ENCODE measurements at regions of chr6 and their contacts with region 1.

Region 1: DNA sequence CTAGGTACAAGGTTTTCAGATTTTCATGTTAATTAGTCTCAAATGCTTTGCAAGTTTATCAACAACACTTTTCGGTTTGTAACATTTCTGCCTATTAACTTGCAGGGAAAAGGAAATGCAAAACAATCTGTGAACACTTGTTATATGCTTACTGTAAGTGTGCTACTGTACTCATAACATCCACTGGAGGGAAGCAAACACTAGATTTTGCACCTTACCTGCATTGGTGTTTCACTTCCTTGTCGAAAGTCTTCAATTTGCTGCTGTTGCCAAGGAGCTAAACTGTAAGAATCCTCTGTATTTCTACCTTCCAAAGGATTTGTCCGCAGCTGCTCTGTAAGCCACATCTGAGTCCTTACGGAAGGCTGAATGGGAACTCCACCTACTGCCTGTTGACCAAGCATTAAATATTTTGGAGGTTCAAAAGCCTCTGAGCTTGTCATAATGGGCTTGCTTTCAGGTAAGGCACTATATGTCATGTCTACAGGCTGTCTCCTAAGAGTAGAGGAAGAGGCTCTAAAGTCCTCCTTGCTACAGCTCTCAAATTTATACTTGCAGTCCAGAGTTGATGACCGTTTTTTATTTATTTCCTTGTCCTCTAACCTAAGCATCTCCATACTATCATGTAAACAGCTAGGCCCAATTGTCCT is 17.3 kb downstream of the PLN start:
- DNase-seq: peak in 16 of 35 experiments; percentile 4 to 77 (median 19)
- ATAC-seq: peak; percentile 88 to 97 (median 94)
- H3K4me3 ChIP-seq: no peak overlapping the region
- H3K4me3 Mint-ChIP-seq: no peak overlapping the region
- H3K27ac ChIP-seq: peak overlapping the region; percentile 48
- H3K27ac Mint-ChIP-seq: peak overlapping the region; percentile 62 to 83
- H3K4me1 ChIP-seq: peaks cover 0 to 2% of the 10 kb centered on the region in 2 experiments
- H3K4me1 Mint-ChIP-seq: peaks cover 42 to 51% (median 50%) of the 10 kb centered on the region in 3 donors
- H3K27me3 ChIP-seq: no peaks in the 10 kb centered on the region
- H3K27me3 Mint-ChIP-seq: no peaks in the 10 kb centered on the region

Region 2: GRCh38 chr6:117545161-117545595 is 1020.3 kb before region 1 on chr6:
- CTCF ChIA-PET with region 1: no interaction called
- POLR2A ChIA-PET with region 1: no interaction called
- DNase-seq: no peak
- ATAC-seq: no peak
- H3K4me3 ChIP-seq: no peak overlapping the region
- H3K4me3 Mint-ChIP-seq: no peak overlapping the region
- H3K27ac ChIP-seq: no peak overlapping the region
- H3K27ac Mint-ChIP-seq: peak overlapping the region in 1 of 2 donors; percentile 16
- H3K4me1 ChIP-seq: peaks cover 17 to 20% of the 10 kb centered on the region in 2 experiments
- H3K4me1 Mint-ChIP-seq: peaks cover 34 to 36% (median 34%) of the 10 kb centered on the region in 3 donors
- H3K27me3 ChIP-seq: no peaks in the 10 kb centered on the region
- H3K27me3 Mint-ChIP-seq: peaks cover 2% of the 10 kb centered on the region in 2 donors

Region 3: GRCh38 chr6:118709859-118710350 is 144.5 kb after region 1 on chr6:
- CTCF ChIA-PET with region 1: interaction called in 1 of 2 experiments, 4 read pairs
- POLR2A ChIA-PET with region 1: interaction called in 1 of 2 experiments, 12 read pairs
- DNase-seq: peak; percentile 41 to 89 (median 65)
- ATAC-seq: peak; percentile 92 to 93 (median 92)
- H3K4me3 ChIP-seq: peak overlapping the region; percentile 74 to 80
- H3K4me3 Mint-ChIP-seq: peak overlapping the region; percentile 91 to 97 (median 96)
- H3K27ac ChIP-seq: peak overlapping the region; percentile 75
- H3K27ac Mint-ChIP-seq: peak overlapping the region; percentile 98
- H3K4me1 ChIP-seq: peaks cover 49 to 50% of the 10 kb centered on the region in 2 experiments
- H3K4me1 Mint-ChIP-seq: peaks cover 70 to 78% (median 78%) of the 10 kb centered on the region in 3 donors
- H3K27me3 ChIP-seq: no peaks in the 10 kb centered on the region
- H3K27me3 Mint-ChIP-seq: no peaks in the 10 kb centered on the region

Region 4: DNA sequence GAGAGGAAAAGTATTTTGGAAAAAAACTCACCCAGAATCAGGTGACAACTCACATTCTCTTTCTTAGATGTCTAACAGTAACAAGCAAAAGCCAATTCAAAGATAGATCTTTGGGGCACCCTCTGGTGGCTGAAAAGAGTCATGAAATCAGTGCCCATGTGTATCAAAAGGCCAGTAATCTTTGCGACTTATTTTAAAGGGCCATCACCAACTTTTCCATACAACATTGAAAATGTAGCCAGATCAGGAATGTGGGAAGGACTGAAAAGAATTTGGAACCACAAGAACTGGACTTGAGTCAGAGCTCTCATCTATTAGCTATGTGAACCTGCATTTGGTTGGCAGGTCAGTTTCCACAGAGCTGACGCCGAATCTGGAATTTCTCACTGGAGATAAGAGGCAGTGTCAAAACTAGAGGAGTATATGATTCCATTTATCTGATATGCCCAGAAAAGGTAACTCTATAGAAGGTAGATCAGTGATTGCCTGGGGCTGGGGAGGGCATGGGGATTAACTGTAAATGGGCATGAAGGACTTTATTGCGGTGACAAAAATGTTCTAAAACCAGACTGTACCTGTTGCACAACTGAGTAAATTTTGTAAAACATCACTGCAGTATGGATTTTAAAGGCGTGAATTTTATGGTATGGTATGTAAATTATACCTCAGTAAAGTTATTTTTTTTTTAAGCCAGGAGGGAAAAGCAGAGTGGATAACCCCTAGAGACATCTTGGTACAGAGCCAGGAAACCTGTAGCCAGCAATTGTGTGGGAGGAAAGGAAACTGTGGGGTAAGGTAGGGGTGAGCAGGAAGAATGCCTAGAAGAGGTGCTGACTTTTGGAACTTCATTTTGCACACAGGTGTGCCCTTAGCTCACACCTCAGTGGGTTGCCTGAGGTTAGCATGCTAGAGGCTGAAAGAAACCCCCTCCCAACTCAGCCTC is 211.4 kb after region 1 on chr6:
- CTCF ChIA-PET with region 1: interaction called, 4 to 14 read pairs
- POLR2A ChIA-PET with region 1: no interaction called
- DNase-seq: peak; percentile 30 to 82 (median 58)
- ATAC-seq: peak; percentile 82 to 89 (median 85)
- H3K4me3 ChIP-seq: no peak overlapping the region
- H3K4me3 Mint-ChIP-seq: peak overlapping the region in 1 of 3 donors; percentile 44
- H3K27ac ChIP-seq: no peak overlapping the region
- H3K27ac Mint-ChIP-seq: peak overlapping the region; percentile 65 to 71
- H3K4me1 ChIP-seq: peaks cover 9% of the 10 kb centered on the region in 2 experiments
- H3K4me1 Mint-ChIP-seq: peaks cover 20 to 24% (median 24%) of the 10 kb centered on the region in 3 donors
- H3K27me3 ChIP-seq: no peaks in the 10 kb centered on the region
- H3K27me3 Mint-ChIP-seq: no peaks in the 10 kb centered on the region

Region 5: DNA sequence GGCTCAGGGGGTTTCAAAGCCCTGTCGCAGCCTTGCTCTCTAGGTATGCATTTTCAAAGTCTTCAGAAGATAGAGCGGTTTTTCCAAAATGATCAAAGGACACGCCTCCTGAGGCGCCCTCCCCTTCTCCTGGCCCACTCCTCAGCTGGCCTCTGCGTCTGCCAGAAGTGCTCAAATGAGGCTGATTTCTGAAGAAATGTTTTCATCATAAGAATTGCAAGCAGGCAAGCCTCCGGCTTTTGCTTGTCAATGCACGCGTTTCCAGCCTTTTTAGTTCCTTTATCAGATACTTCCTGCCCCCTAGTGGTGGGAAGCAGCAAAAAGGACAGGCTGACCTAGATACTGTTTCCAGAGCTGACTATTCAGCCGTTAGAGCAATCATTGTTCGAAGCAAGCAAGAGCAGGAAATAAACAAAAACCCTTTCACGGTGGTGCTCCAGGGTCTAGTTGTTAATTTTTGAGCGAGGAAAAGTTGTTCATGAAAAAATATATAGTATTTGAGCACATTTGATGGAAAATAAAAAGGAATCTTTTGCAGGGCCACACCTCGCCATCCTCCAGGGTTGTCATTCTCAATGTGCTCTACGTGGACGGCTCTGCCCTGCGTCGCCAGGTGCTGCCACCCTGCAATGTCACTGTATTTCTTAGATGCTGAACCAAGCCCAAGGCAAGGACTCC is 235.1 kb after region 1 on chr6:
- CTCF ChIA-PET with region 1: interaction called, 7 to 13 read pairs
- POLR2A ChIA-PET with region 1: interaction called, 5 to 6 read pairs
- DNase-seq: peak; percentile 60 to 91 (median 81)
- ATAC-seq: peak; percentile 89 to 94 (median 90)
- H3K4me3 ChIP-seq: no peak overlapping the region
- H3K4me3 Mint-ChIP-seq: peak overlapping the region; percentile 43 to 64 (median 60)
- H3K27ac ChIP-seq: peak overlapping the region; percentile 76
- H3K27ac Mint-ChIP-seq: peak overlapping the region; percentile 86 to 90
- H3K4me1 ChIP-seq: peaks cover 0 to 27% of the 10 kb centered on the region in 2 experiments
- H3K4me1 Mint-ChIP-seq: peaks cover 26 to 49% (median 42%) of the 10 kb centered on the region in 3 donors
- H3K27me3 ChIP-seq: no peaks in the 10 kb centered on the region
- H3K27me3 Mint-ChIP-seq: no peaks in the 10 kb centered on the region

Region 6: DNA sequence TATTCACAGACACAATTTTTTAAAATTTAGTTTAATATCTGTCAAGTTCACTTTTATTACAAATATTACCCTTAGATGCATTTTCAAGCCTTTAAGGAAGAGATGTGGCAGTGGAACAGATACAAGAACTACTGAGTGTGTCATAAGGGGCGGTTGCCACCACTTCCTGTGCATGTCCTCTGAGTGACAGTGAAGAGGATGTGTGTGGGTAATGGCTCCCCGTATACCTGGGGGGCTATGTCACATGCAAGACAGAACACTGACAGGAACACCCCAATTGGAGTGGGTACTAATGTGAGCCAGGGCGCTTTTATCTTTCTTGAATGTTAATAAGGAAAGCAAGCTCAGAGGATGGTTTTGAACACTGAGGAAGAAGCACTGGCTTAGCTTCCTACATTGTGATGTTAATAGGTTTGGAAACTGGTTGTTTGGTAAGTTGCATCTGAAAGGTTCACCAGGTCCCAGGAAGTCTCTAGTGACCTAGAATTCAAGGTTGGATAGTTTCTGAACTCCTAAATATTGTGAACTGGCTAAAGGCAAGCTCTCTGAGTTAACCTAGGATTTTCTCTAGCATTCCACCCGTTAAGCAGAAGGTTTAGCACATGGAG is 245.1 kb after region 1 on chr6:
- CTCF ChIA-PET with region 1: interaction called, 6 to 14 read pairs
- POLR2A ChIA-PET with region 1: no interaction called
- DNase-seq: peak; percentile 38 to 85 (median 72)
- ATAC-seq: peak; percentile 97 to 99 (median 98)
- H3K4me3 ChIP-seq: peak overlapping the region in 1 of 2 donors; percentile 8
- H3K4me3 Mint-ChIP-seq: peak overlapping the region; percentile 46 to 59 (median 51)
- H3K27ac ChIP-seq: peak overlapping the region; percentile 91
- H3K27ac Mint-ChIP-seq: peak overlapping the region; percentile 96
- H3K4me1 ChIP-seq: peaks cover 18 to 24% of the 10 kb centered on the region in 2 experiments
- H3K4me1 Mint-ChIP-seq: peaks cover 51 to 69% (median 65%) of the 10 kb centered on the region in 3 donors
- H3K27me3 ChIP-seq: no peaks in the 10 kb centered on the region
- H3K27me3 Mint-ChIP-seq: no peaks in the 10 kb centered on the region

Region 7: GRCh38 chr6:118881440-118882313 is 316.2 kb after region 1 on chr6:
- CTCF ChIA-PET with region 1: no interaction called
- POLR2A ChIA-PET with region 1: no interaction called
- DNase-seq: no peak
- ATAC-seq: peak in 2 of 4 experiments; percentile 41 to 42
- H3K4me3 ChIP-seq: no peak overlapping the region
- H3K4me3 Mint-ChIP-seq: peak overlapping the region; percentile 31 to 49 (median 34)
- H3K27ac ChIP-seq: no peak overlapping the region
- H3K27ac Mint-ChIP-seq: peak overlapping the region; percentile 42 to 66
- H3K4me1 ChIP-seq: peaks cover 3 to 7% of the 10 kb centered on the region in 2 experiments
- H3K4me1 Mint-ChIP-seq: peaks cover 78 to 85% (median 79%) of the 10 kb centered on the region in 3 donors
- H3K27me3 ChIP-seq: no peaks in the 10 kb centered on the region
- H3K27me3 Mint-ChIP-seq: no peaks in the 10 kb centered on the region

Region 8: GRCh38 chr6:118893807-118894424 is 328.5 kb after region 1 on chr6 and contains the start of gene ASF1A:
- CTCF ChIA-PET with region 1: interaction called, 7 to 19 read pairs
- POLR2A ChIA-PET with region 1: interaction called in 1 of 2 experiments, 3 read pairs
- DNase-seq: peak; percentile 86 to 97 (median 93)
- ATAC-seq: peak; percentile 78 to 81 (median 79)
- H3K4me3 ChIP-seq: peak within 1 kb of the TSS; percentile 89 to 94
- H3K4me3 Mint-ChIP-seq: peak within 1 kb of the TSS; percentile 91 to 96 (median 94)
- H3K27ac ChIP-seq: peak within 1 kb of the TSS; percentile 91
- H3K27ac Mint-ChIP-seq: peak within 1 kb of the TSS; percentile 99 to 100
- H3K4me1 ChIP-seq: peaks cover 35 to 41% of the 10 kb centered on the region in 2 experiments
- H3K4me1 Mint-ChIP-seq: peaks cover 61 to 65% (median 65%) of the 10 kb centered on the region in 3 donors
- H3K27me3 ChIP-seq: no peaks in the 10 kb centered on the region
- H3K27me3 Mint-ChIP-seq: no peaks in the 10 kb centered on the region
- total RNA-seq, gene ASF1A: 16.8 to 49.6 (median 42.5) TPM

Region 9: DNA sequence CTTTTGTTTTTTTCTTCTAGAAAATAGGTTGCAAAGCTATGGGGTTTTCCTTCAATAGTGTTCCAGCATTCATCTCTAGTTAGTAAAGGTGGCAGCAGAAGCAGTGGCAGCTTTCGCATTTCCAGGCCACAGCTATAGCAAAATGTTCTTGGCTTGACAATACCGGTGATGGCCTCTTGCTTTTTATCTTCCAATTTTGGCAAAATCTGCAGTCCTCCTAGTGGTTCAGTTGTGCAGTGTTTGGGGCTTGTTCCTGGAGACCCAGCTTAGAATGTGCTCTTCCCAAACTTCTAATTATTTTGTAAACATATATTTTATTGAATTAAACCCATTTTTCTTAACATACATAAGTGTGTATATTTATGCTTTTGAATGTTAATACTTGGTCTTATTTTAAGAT is 1154.7 kb after region 1 on chr6:
- CTCF ChIA-PET with region 1: no interaction called
- POLR2A ChIA-PET with region 1: no interaction called
- DNase-seq: no peak
- ATAC-seq: no peak
- H3K4me3 ChIP-seq: no peak overlapping the region
- H3K4me3 Mint-ChIP-seq: no peak overlapping the region
- H3K27ac ChIP-seq: no peak overlapping the region
- H3K27ac Mint-ChIP-seq: no peak overlapping the region
- H3K4me1 ChIP-seq: no peaks in the 10 kb centered on the region
- H3K4me1 Mint-ChIP-seq: peaks cover 3 to 7% (median 6%) of the 10 kb centered on the region in 3 donors
- H3K27me3 ChIP-seq: no peaks in the 10 kb centered on the region
- H3K27me3 Mint-ChIP-seq: no peaks in the 10 kb centered on the region